Heart left ventricle (tissue), 16 donors: ENCODE measurements at regions of chr14 and their contacts with region 1.

Region 1: GRCh38 chr14:92951912-92952471 is 29.0 kb downstream of the CHGA start:
- DNase-seq: peak; percentile 74 to 87 (median 79)
- ATAC-seq: peak; percentile 54 to 79 (median 76)
- H3K4me3 ChIP-seq: no peak overlapping the region
- H3K27ac ChIP-seq: peak overlapping the region; percentile 15 to 84 (median 68)
- H3K4me1 ChIP-seq: peaks cover 0 to 67% (median 19%) of the 10 kb centered on the region in 12 donors
- H3K27me3 ChIP-seq: no peaks in the 10 kb centered on the region
- CTCF ChIP-seq: peak; percentile 92 to 98 (median 96)
- POLR2A ChIP-seq: no peak

Region 2: GRCh38 chr14:93033983-93034670 is 82.1 kb after region 1 on chr14:
- intact Hi-C with region 1: loop called in 1 of 10 experiments (anchors 5 kb)
- DNase-seq: no peak
- ATAC-seq: peak in 3 of 4 donors; percentile 10 to 54 (median 36)
- H3K4me3 ChIP-seq: no peak overlapping the region
- H3K27ac ChIP-seq: peak overlapping the region in 5 of 12 donors; percentile 2 to 90 (median 29)
- H3K4me1 ChIP-seq: peaks cover 13 to 75% (median 50%) of the 10 kb centered on the region in 12 donors
- H3K27me3 ChIP-seq: no peaks in the 10 kb centered on the region
- CTCF ChIP-seq: peak in 10 of 12 donors; percentile 35 to 63 (median 50)
- POLR2A ChIP-seq: no peak